Body of pancreas (tissue), 4 donors: ENCODE measurements at regions of chr19 and their contacts with region 1.

Region 1: GRCh38 chr19:34712395-34713261 is 21.4 kb upstream of the ZNF181 start:
- DNase-seq: peak; percentile 67 to 78 (median 68)
- ATAC-seq: peak; percentile 74
- H3K4me3 ChIP-seq: no peak overlapping the region
- H3K27ac ChIP-seq: no peak overlapping the region
- H3K4me1 ChIP-seq: peaks cover 4% of the 10 kb centered on the region
- H3K27me3 ChIP-seq: no peaks in the 10 kb centered on the region
- CTCF ChIP-seq: peak; percentile 57 to 93 (median 78)
- POLR2A ChIP-seq: no peak

Region 2: DNA sequence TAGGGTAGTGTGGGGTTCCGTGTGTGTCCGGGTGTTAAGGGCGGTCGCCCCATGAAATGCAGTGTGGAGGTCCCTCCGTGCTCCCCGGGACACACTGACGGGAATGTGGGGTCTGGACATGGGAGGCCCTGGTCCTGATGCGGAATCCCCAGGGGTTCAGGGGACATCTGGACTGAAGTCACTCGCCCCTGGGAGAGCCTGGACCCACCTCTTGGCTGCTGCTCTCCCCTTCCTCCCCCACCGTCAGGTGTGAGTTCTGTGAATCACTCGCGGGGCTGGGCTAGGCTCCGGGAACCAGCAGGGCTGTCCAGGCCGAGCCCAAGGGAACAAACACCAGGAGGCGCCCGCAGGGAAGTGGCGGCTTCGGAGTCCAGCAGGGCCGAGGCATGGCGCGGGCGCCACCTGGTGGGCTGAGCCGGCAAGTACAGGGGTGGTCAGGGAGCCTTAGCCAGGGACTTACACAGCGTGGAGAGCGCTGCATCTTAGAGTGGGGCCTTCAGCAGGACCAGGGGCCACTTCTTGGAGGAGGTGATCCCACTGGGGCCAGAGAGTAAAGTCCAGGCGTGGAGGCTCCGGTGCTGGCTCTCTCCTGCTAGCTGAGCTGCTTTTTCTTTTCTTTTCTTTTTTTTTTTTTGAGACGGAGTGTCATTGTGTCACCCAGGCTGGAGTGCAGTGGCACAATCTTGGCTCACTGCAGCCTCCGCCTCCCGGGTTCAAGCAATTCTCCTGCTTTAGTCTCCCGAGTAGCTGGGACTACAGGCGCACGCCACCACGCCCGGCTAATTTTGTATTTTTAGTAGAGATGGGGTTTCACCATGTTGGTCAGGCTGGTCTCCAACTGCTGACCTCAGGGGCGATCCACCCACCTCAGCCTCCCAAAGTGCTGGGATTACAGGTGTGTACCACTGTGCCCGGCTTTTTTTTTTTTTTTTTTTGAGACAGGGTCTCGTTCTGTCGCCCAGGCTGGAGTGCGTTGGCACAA is 211.0 kb before region 1 on chr19:
- intact Hi-C with region 1: loop called (anchors 5 kb)
- DNase-seq: peak; percentile 92 to 95 (median 94)
- ATAC-seq: peak; percentile 95
- H3K4me3 ChIP-seq: no peak overlapping the region
- H3K27ac ChIP-seq: no peak overlapping the region
- H3K4me1 ChIP-seq: peaks cover 4% of the 10 kb centered on the region
- H3K27me3 ChIP-seq: no peaks in the 10 kb centered on the region
- CTCF ChIP-seq: peak; percentile 99 to 100 (median 99)
- POLR2A ChIP-seq: peak in 1 of 3 donors; percentile 13

Region 3: GRCh38 chr19:34540811-34541557 is 171.6 kb before region 1 on chr19:
- intact Hi-C with region 1: no loop called
- DNase-seq: no peak
- ATAC-seq: no peak
- H3K4me3 ChIP-seq: no peak overlapping the region
- H3K27ac ChIP-seq: no peak overlapping the region
- H3K4me1 ChIP-seq: peaks cover 5% of the 10 kb centered on the region
- H3K27me3 ChIP-seq: no peaks in the 10 kb centered on the region
- CTCF ChIP-seq: no peak
- POLR2A ChIP-seq: no peak

Region 4: DNA sequence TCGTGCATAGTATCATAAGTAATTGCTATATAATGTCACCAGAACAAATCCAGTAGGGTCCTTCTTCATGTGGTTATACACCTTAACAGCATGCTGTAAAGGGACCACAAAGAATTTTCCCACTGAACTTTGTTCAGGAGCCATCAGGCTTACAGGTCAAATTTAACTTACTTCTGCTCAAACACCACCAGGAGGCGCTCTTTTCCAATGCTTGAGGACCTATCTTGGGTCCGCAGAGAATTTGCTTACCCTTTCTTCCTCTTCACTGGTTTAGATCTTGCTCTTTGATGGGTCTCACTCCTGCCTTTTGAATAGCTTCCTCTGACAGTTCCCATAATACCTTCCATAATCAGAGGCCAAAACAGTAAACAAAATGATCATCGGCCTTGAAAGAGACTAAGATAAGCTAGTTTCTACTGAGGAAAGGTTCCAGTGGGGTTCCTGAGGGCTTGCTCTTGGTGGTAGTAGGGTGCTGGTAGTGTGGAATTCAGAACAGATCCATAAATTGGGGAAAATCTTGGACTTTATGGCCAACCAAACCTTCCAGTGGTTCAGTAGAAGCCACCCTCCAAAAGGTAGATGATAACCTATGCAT is 73.0 kb before region 1 on chr19:
- intact Hi-C with region 1: loop called (anchors 5 kb)
- DNase-seq: peak; percentile 63 to 74 (median 73)
- ATAC-seq: peak; percentile 71
- H3K4me3 ChIP-seq: no peak overlapping the region
- H3K27ac ChIP-seq: no peak overlapping the region
- H3K4me1 ChIP-seq: peaks cover 3% of the 10 kb centered on the region
- H3K27me3 ChIP-seq: no peaks in the 10 kb centered on the region
- CTCF ChIP-seq: peak; percentile 56 to 87 (median 73)
- POLR2A ChIP-seq: no peak

Region 5: DNA sequence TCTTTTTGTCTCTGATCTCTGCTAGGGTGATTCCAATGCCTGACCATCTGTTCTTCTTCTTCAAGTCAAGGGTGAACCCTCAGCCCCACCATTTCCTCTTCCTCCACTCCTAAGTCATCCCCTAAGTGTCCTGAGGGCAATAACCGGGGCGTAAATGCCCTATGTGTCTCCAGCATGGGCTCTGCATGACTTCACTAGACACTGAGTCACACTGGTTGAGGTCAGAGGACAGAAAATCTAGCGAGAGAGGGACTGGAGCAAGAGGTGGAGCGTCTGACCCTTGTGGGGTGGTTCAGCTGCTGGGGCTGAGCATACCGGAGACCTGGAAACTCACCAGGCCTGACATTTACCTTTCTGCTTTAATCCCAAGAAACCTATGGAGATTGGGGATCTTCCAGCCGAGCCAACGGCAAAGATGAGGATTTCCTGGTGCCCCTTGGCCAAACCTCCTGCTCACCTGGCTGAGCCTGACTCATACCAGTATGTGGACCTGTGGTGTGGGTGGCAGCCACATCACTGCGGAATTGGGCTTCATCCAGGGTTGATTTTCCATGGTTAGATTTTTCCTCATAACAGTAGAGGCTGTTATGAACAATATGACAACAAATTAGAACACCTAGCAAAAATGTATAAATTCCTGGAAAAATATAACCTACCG is 62.6 kb before region 1 on chr19:
- intact Hi-C with region 1: no loop called
- DNase-seq: no peak
- ATAC-seq: no peak
- H3K4me3 ChIP-seq: no peak overlapping the region
- H3K27ac ChIP-seq: no peak overlapping the region
- H3K4me1 ChIP-seq: peaks cover 8% of the 10 kb centered on the region
- H3K27me3 ChIP-seq: no peaks in the 10 kb centered on the region
- CTCF ChIP-seq: no peak
- POLR2A ChIP-seq: no peak

Region 6: DNA sequence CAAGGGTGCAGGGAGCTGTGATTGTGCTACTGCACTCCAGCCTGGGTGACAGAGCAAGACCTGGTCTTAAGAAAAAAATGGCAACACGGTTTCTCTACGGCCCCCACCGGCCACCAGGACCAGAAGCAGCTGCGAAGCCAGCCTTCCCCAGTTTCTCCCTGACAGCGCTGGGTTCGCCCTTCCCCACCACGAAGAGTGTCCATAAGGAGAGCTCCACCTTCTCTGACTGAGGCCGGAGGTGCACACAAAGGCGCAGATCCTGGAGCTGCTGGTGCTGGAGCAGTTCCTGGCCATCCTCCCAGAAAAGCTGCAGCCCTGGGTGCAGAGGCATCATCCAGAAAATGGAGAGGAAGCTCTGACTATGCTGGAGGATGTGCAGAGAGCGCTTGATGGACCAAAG is 112.6 kb after region 1 on chr19:
- intact Hi-C with region 1: no loop called
- DNase-seq: no peak
- ATAC-seq: no peak
- H3K4me3 ChIP-seq: no peak overlapping the region
- H3K27ac ChIP-seq: no peak overlapping the region
- H3K4me1 ChIP-seq: no peaks in the 10 kb centered on the region
- H3K27me3 ChIP-seq: no peaks in the 10 kb centered on the region
- CTCF ChIP-seq: no peak
- POLR2A ChIP-seq: no peak

Region 7: GRCh38 chr19:34904846-34905527 is 192.4 kb after region 1 on chr19:
- intact Hi-C with region 1: no loop called
- DNase-seq: no peak
- ATAC-seq: no peak
- H3K4me3 ChIP-seq: no peak overlapping the region
- H3K27ac ChIP-seq: no peak overlapping the region
- H3K4me1 ChIP-seq: peaks cover 9% of the 10 kb centered on the region
- H3K27me3 ChIP-seq: peaks cover 0 to 6% of the 10 kb centered on the region in 2 donors
- CTCF ChIP-seq: no peak
- POLR2A ChIP-seq: no peak